Motor neuron (in vitro differentiated cells): ENCODE measurements at regions of chr16 and their contacts with region 1.

Region 1: GRCh38 chr16:7313170-7313569 is 19.5 kb upstream of the RBFOX1 start:
- ATAC-seq: peak in 1 of 8 experiments; percentile 39
- H3K4me3 ChIP-seq: no peak overlapping the region
- H3K27ac ChIP-seq: no peak overlapping the region
- H3K4me1 ChIP-seq: peaks cover 0 to 68% of the 10 kb centered on the region in 2 donors

Region 2: DNA sequence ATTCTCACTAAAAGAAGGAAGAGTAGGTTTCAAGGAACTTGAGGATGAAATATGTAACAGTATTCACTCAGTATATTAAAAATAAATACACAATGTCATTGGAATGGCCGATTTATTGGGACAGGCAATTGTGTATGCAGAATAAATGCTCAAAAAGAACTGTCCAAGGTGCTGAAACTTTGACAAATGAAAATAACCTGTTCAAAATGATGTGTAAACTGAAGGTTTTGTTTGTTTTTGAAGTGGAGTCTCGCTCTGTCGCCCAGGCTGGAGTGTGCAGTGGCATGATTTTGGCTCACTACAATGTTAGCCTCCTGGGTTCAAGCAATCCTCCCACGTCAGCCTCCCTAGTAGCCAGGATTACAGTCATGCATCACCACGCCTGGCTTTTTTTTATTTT is 299.2 kb before region 1 on chr16:
- in situ Hi-C with region 1: no loop called
- ATAC-seq: no peak
- H3K4me3 ChIP-seq: no peak overlapping the region
- H3K27ac ChIP-seq: no peak overlapping the region
- H3K4me1 ChIP-seq: peaks cover 0 to 56% of the 10 kb centered on the region in 2 donors

Region 3: DNA sequence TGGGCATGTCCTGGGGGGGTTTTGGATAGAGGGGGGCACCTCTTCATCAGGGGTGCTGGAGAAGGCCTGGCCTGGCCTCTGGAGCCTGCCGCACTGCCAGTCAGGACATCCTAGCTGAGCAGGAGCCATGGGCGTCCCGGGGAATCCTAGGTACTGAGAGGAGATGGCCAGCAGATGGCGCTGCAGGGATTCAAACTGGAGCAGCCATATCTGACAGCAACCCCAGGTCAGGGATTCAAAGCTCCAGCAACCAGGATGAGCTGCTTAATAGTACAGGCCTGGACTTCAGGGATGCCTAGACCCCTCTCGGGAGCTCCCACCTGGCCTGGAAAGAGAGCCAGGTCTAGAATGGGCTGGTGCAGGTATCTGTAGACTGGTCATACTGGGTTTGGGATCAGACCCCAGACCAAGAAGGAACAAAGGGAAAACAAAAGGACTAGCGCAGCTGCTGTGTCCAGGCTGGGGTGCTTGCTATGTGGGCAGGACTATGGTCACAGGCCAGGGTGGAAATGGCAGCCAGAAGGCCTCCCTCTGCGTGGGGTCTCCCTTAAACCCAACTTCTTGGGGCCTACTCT is 287.5 kb before region 1 on chr16:
- in situ Hi-C with region 1: loop called in 1 of 9 experiments (anchors 25 kb)
- ATAC-seq: peak; percentile 61 to 99 (median 88)
- H3K4me3 ChIP-seq: no peak overlapping the region
- H3K27ac ChIP-seq: peak overlapping the region in 1 of 2 donors; percentile 43
- H3K4me1 ChIP-seq: peaks cover 0 to 15% of the 10 kb centered on the region in 2 donors